B cell (primary cell): ENCODE measurements at regions of chr6 and their contacts with region 1.

Region 1: GRCh38 chr6:45421709-45422502 is 44.2 kb upstream of the SUPT3H start:
- DNase-seq: peak; percentile 77
- ATAC-seq: peak; percentile 46
- H3K4me3 ChIP-seq: peak overlapping the region; percentile 47 to 65 (median 57)
- H3K4me3 Mint-ChIP-seq: peak overlapping the region; percentile 93
- H3K27ac ChIP-seq: peak overlapping the region in 1 of 2 donors; percentile 35
- H3K27ac Mint-ChIP-seq: peak overlapping the region; percentile 78
- H3K4me1 ChIP-seq: peaks cover 46 to 51% of the 10 kb centered on the region in 2 donors
- H3K4me1 Mint-ChIP-seq: peaks cover 49% of the 10 kb centered on the region
- H3K27me3 ChIP-seq: peaks cover 0 to 62% (median 47%) of the 10 kb centered on the region in 4 experiments
- H3K27me3 Mint-ChIP-seq: peaks cover 33% of the 10 kb centered on the region
- CTCF ChIP-seq: no peak

Region 2: DNA sequence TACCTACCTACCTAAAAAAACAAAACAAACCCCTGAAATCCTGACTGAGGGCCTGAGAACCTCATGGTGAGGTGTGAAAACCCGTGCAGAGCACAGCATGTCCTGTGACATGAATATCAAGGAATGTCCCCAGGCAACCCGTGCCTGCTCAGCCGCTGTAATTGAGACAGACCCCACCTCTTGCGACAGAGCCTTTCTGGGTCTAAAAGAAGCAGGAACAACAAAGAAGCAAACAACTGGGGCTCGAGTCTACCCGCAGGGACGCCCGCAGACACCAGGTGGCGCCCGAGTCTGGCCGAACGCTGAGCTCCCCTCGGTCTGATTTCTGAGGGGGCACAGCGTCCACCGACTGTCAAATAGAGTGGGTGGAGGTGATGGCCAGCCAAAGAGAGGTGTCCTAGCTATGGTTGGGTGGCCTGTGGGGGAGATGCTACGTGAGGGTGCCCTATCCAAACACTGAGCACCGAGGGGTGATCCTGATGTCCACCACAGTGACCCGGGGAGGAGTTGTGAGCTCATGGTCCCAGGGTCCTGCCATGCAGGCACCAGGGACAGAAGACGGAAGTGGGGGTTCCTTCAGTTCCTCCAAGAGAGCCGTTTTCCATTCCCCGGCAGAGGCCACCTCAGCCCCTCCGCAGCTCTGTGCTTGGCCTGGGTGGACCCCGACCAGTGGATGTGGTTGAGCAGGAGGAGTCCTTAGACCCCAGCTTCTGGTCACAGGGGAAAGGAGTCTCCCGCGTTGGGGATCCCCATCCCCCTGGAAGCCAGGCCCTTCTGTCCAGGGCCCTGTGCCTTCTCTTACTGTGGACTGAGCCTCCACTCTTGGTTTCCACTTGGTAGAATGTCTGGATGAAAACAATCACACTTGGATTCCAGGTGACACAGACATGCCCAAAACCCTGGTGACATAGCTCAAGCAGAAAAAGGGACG is 766.2 kb before region 1 on chr6:
- CTCF ChIA-PET with region 1: interaction called, 25 read pairs
- POLR2A ChIA-PET with region 1: no interaction called
- intact Hi-C with region 1: no loop called
- DNase-seq: peak; percentile 66
- ATAC-seq: peak; percentile 51
- H3K4me3 ChIP-seq: no peak overlapping the region
- H3K4me3 Mint-ChIP-seq: no peak overlapping the region
- H3K27ac ChIP-seq: no peak overlapping the region
- H3K27ac Mint-ChIP-seq: no peak overlapping the region
- H3K4me1 ChIP-seq: no peaks in the 10 kb centered on the region
- H3K4me1 Mint-ChIP-seq: peaks cover 5% of the 10 kb centered on the region
- H3K27me3 ChIP-seq: peaks cover 0 to 13% (median 6%) of the 10 kb centered on the region in 4 experiments
- H3K27me3 Mint-ChIP-seq: peaks cover 39% of the 10 kb centered on the region
- CTCF ChIP-seq: peak; percentile 94

Region 3: DNA sequence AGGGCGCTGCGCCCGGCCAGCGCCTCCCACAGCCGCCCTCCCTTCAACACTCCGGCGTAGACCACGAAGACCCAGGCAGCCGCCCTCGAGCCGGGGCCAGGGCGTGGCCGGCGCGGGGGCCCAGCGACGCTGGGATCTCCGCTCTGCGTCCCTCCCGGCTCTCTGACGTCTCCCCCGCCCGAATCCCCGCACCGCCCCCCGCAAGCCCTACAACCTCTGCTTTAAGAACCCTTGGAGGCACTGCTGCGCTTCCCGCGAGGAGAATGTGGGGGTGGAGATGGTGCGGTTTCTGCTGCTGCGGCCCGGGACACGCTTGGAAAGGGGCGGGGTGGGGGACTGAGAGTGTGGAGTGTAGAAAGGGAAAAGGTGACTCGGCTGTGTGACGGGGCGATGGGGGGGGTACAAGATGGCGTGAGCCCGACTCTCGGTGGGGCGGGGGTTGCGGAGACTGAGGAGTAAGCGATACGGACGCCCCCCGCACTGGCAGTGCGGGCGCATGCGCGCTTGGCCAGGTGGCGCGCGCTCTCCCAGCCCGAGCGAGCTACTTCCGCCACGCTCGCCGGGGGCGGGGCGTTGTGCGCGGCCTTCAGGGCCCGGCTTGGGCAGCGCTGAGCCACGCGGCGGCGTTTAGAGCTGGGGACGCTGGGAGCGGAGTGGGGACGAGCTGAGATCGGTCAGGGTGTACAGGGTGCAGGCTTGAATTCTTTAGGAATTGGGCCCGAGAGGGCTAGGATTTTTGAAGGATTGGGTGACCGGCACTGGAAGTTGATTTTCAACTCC is 44.2 kb before region 1 on chr6 and contains the start of gene SUPT3H:
- CTCF ChIA-PET with region 1: no interaction called
- POLR2A ChIA-PET with region 1: no interaction called
- intact Hi-C with region 1: loop called (anchors 1 kb)
- DNase-seq: peak; percentile 95
- ATAC-seq: peak; percentile 77
- H3K4me3 ChIP-seq: peak within 1 kb of the TSS; percentile 76 to 98 (median 93)
- H3K4me3 Mint-ChIP-seq: peak within 1 kb of the TSS; percentile 98
- H3K27ac ChIP-seq: peak within 1 kb of the TSS; percentile 97
- H3K27ac Mint-ChIP-seq: peak within 1 kb of the TSS; percentile 97
- H3K4me1 ChIP-seq: peaks cover 9 to 12% of the 10 kb centered on the region in 2 donors
- H3K4me1 Mint-ChIP-seq: peaks cover 28% of the 10 kb centered on the region
- H3K27me3 ChIP-seq: no peaks in the 10 kb centered on the region
- H3K27me3 Mint-ChIP-seq: no peaks in the 10 kb centered on the region
- CTCF ChIP-seq: no peak
- total RNA-seq, gene SUPT3H: 12.4 and 14.1 TPM in 2 replicates

Region 4: GRCh38 chr6:45479834-45480751 is 58.2 kb after region 1 on chr6:
- CTCF ChIA-PET with region 1: no interaction called
- POLR2A ChIA-PET with region 1: no interaction called
- intact Hi-C with region 1: loop called (anchors 2 kb)
- DNase-seq: no peak
- ATAC-seq: no peak
- H3K4me3 ChIP-seq: no peak overlapping the region
- H3K4me3 Mint-ChIP-seq: no peak overlapping the region
- H3K27ac ChIP-seq: no peak overlapping the region
- H3K27ac Mint-ChIP-seq: peak overlapping the region; percentile 16
- H3K4me1 ChIP-seq: peaks cover 3 to 14% of the 10 kb centered on the region in 2 donors
- H3K4me1 Mint-ChIP-seq: peaks cover 13% of the 10 kb centered on the region
- H3K27me3 ChIP-seq: no peaks in the 10 kb centered on the region
- H3K27me3 Mint-ChIP-seq: no peaks in the 10 kb centered on the region
- CTCF ChIP-seq: no peak

Region 5: DNA sequence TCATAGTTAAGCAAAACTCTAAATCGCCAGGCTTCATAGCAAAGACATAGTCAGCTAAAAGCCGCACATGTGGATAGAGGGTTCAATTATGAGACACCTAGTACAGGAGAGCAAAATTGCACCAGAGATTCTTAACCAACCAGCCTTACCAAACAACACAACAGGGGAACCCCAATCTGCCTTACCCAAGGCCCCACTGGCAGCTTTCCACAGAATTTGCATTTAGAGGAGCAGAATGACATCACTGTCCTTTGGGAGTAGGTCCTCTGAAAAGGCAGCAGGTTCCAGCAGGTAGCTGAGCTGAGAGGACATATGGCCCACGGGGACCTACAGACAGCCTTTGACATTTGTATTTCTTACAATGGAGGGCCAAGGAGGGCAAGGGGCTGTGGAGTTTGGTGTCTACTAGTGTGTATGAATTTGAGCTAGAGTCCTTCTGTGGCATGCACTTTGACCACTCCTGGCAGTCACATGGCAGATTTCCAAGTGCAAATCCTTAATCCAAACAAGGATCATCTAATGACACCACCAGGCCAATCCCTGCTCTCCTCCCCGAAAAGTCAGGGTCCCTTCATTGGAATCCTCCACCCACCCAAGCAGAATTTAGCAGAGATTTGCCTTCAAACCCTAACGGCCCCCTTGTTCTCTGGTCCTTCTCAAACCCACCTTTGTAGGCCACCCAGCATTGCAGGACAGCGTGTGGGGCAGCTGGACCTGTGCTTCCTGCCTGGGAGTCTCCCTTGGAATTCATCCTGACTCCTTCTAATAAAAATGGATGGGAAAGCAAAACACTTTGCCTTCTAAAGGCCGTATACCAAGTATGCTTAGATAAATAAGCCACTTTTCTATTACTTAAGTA is 127.0 kb after region 1 on chr6:
- CTCF ChIA-PET with region 1: no interaction called
- POLR2A ChIA-PET with region 1: no interaction called
- intact Hi-C with region 1: loop called (anchors 2 kb)
- DNase-seq: peak; percentile 69
- ATAC-seq: peak; percentile 95
- H3K4me3 ChIP-seq: no peak overlapping the region
- H3K4me3 Mint-ChIP-seq: peak overlapping the region; percentile 32
- H3K27ac ChIP-seq: no peak overlapping the region
- H3K27ac Mint-ChIP-seq: no peak overlapping the region
- H3K4me1 ChIP-seq: peaks cover 10% of the 10 kb centered on the region in 2 donors
- H3K4me1 Mint-ChIP-seq: peaks cover 14% of the 10 kb centered on the region
- H3K27me3 ChIP-seq: no peaks in the 10 kb centered on the region
- H3K27me3 Mint-ChIP-seq: no peaks in the 10 kb centered on the region
- CTCF ChIP-seq: no peak

Region 6: GRCh38 chr6:45677381-45678284 is 255.7 kb after region 1 on chr6:
- CTCF ChIA-PET with region 1: no interaction called
- POLR2A ChIA-PET with region 1: interaction called, 4 read pairs
- intact Hi-C with region 1: loop called (anchors 5 kb)
- DNase-seq: peak; percentile 87
- ATAC-seq: peak; percentile 76
- H3K4me3 ChIP-seq: peak overlapping the region in 3 of 5 experiments; percentile 0 to 39 (median 10)
- H3K4me3 Mint-ChIP-seq: peak overlapping the region; percentile 68
- H3K27ac ChIP-seq: peak overlapping the region; percentile 54 to 79
- H3K27ac Mint-ChIP-seq: peak overlapping the region; percentile 69
- H3K4me1 ChIP-seq: peaks cover 43 to 61% of the 10 kb centered on the region in 2 donors
- H3K4me1 Mint-ChIP-seq: peaks cover 55% of the 10 kb centered on the region
- H3K27me3 ChIP-seq: peaks cover 0 to 3% (median 0%) of the 10 kb centered on the region in 4 experiments
- H3K27me3 Mint-ChIP-seq: no peaks in the 10 kb centered on the region
- CTCF ChIP-seq: no peak

Region 7: GRCh38 chr6:45714741-45715507 is 293.0 kb after region 1 on chr6:
- CTCF ChIA-PET with region 1: interaction called, 20 read pairs
- POLR2A ChIA-PET with region 1: no interaction called
- intact Hi-C with region 1: loop called (anchors 5 kb)
- DNase-seq: peak; percentile 75
- ATAC-seq: peak; percentile 65
- H3K4me3 ChIP-seq: no peak overlapping the region
- H3K4me3 Mint-ChIP-seq: no peak overlapping the region
- H3K27ac ChIP-seq: no peak overlapping the region
- H3K27ac Mint-ChIP-seq: no peak overlapping the region
- H3K4me1 ChIP-seq: peaks cover 6 to 20% of the 10 kb centered on the region in 2 donors
- H3K4me1 Mint-ChIP-seq: peaks cover 22% of the 10 kb centered on the region
- H3K27me3 ChIP-seq: no peaks in the 10 kb centered on the region
- H3K27me3 Mint-ChIP-seq: no peaks in the 10 kb centered on the region
- CTCF ChIP-seq: peak; percentile 73